ENCODE measurements at regions of chr3 and their contacts with region 1.

Region 1: GRCh38 chr3:63993653-63994079 is 29.6 kb downstream of the PSMD6 start:
- DNase-seq: peak; percentile 61
- H3K4me3 Mint-ChIP-seq: no peak overlapping the region
- H3K27ac Mint-ChIP-seq: peak overlapping the region; percentile 65
- H3K4me1 Mint-ChIP-seq: peaks cover 30% of the 10 kb centered on the region
- H3K27me3 Mint-ChIP-seq: no peaks in the 10 kb centered on the region

Region 2: GRCh38 chr3:63945558-63946096 is 48.0 kb before region 1 on chr3:
- CTCF ChIA-PET with region 1: interaction called, 10 read pairs
- POLR2A ChIA-PET with region 1: no interaction called
- intact Hi-C with region 1: no loop called
- DNase-seq: no peak
- H3K4me3 Mint-ChIP-seq: no peak overlapping the region
- H3K27ac Mint-ChIP-seq: no peak overlapping the region
- H3K4me1 Mint-ChIP-seq: peaks cover 56% of the 10 kb centered on the region
- H3K27me3 Mint-ChIP-seq: no peaks in the 10 kb centered on the region

Region 3: DNA sequence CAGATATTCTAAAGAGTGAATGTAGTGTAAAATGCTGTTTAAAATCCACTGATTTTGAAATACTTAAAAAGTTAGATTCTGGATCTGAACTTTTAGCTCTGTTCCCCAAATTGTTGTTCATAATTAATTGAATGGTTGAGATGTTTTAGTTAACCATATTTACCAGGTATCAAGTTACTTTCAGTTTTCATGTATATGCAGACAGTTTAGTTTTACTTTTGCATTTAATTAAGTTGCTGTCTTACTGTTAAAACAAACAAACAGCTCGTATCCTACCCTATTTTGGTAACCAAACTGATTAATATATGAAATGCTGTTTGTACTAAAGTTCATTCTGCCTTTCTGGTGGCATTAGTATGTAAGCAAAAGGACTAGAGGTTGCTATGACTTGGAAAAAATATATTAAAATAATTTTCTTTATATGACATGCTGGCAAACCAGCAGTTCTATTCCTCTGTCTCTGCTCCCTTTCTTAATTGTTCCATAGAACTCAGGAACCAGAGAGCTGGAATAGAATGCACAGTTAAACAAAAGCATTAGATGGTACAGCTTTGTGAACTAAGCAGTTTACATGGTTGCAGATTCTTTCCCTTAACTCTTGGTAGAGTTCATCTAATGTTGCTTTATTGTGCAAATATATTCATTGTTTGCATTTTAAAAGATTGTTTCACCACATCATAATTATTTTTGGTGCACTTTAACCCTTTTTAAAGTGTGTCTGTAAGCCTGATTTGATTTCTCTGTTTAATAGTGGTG is 42.0 kb before region 1 on chr3:
- CTCF ChIA-PET with region 1: interaction called, 360 read pairs
- POLR2A ChIA-PET with region 1: no interaction called
- intact Hi-C with region 1: no loop called
- DNase-seq: no peak
- H3K4me3 Mint-ChIP-seq: peak overlapping the region; percentile 11
- H3K27ac Mint-ChIP-seq: peak overlapping the region; percentile 26
- H3K4me1 Mint-ChIP-seq: peaks cover 51% of the 10 kb centered on the region
- H3K27me3 Mint-ChIP-seq: no peaks in the 10 kb centered on the region

Region 4: DNA sequence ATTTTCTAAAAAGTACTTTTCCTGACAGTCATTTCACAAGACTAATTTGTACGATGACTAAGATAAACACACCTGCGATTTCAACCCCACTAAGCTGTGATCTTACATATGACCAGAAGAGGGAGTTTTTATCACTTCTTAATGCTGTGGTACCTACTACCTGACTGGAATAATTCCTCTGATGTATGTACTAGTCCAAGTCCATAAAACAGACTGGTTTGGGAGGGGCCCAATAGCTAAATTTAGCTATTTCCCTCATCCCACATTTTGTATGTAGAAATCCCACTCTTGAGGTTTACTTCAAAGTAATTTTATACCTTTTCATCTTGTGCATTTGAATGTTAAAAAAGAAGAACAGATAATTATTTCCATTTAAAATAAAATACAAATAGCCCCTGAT is 31.8 kb before region 1 on chr3:
- CTCF ChIA-PET with region 1: interaction called, 360 read pairs
- POLR2A ChIA-PET with region 1: no interaction called
- intact Hi-C with region 1: loop called (anchors 1 kb)
- DNase-seq: no peak
- H3K4me3 Mint-ChIP-seq: no peak overlapping the region
- H3K27ac Mint-ChIP-seq: no peak overlapping the region
- H3K4me1 Mint-ChIP-seq: peaks cover 63% of the 10 kb centered on the region
- H3K27me3 Mint-ChIP-seq: no peaks in the 10 kb centered on the region

Region 5: DNA sequence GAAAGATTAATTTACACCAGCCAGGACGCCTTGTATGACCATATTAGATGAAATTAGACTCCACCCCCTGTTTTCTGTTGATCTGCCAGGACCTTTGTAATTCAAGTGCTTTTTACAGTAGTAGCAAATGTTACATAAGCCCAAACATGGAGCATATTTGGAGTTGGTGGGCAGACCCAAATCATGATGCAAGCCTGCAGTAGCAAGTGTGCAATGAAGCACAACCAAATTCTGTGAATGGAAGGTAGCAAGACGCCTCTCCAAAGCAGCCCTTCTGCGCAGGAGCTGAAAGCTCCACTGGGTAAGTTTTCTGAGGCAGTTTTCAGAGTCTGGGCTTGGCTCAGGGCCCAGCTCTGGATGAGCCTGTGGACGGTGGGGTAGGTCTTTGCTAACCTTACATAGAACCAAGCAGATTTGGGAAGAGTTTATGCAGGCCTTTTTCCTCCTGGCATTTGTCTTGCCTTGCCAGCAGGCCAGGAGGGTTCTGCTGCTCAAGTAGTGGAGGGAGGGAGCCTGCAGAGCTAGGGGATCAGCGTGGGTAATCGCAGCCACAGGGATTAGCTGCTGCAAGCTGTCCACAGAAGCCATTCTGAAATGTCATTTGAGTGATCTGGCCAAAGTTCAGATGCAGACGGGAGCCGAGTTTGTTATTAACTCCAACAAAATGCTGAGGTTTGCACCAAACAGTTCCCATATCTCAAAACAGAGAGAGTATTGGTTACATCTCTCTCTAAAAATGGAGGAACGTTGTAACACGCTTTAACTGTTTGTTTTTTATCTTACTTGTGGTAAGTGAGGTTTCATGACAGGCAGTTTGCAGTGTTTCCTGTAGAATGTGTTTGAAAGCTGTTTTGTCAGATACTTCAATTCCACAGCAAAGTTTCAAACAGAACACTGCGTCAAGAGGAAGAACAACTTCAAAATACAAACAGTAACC is 25.7 kb before region 1 on chr3:
- CTCF ChIA-PET with region 1: interaction called, 360 read pairs
- POLR2A ChIA-PET with region 1: no interaction called
- intact Hi-C with region 1: loop called (anchors 1 kb)
- DNase-seq: peak; percentile 45
- H3K4me3 Mint-ChIP-seq: peak overlapping the region; percentile 71
- H3K27ac Mint-ChIP-seq: peak overlapping the region; percentile 90
- H3K4me1 Mint-ChIP-seq: peaks cover 88% of the 10 kb centered on the region
- H3K27me3 Mint-ChIP-seq: no peaks in the 10 kb centered on the region

Region 6: GRCh38 chr3:64011685-64012084 is 18.0 kb after region 1 on chr3:
- CTCF ChIA-PET with region 1: interaction called, 18 read pairs
- POLR2A ChIA-PET with region 1: no interaction called
- intact Hi-C with region 1: no loop called
- DNase-seq: no peak
- H3K4me3 Mint-ChIP-seq: no peak overlapping the region
- H3K27ac Mint-ChIP-seq: peak overlapping the region; percentile 39
- H3K4me1 Mint-ChIP-seq: peaks cover 35% of the 10 kb centered on the region
- H3K27me3 Mint-ChIP-seq: no peaks in the 10 kb centered on the region

Region 7: DNA sequence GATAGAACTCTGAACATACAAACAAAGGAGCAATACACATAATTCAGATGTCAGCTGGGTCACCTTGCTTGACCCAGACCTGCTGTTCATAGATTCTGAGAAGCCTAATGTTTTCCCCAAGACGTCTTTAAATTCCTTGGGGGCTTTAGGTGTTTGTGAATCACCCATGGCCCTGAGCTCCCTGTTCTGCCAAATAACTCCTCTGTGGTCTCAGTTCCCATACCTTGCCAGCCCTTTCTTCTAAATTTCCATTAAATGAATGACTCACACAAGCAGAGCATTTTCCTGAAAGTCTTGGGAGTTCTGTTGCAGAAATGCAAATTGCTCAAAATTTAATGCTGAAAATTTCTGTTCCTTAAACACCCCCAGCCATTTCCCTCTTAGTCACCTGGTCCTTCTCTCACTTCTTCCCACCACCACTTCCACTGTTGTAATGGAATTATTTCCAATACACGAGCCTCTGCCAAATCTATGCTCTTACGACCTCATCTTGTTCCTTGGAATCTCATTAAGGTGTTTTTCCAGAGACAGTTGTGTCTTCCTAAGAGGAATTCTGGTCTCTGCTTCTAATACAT is 63.0 kb after region 1 on chr3:
- CTCF ChIA-PET with region 1: no interaction called
- POLR2A ChIA-PET with region 1: no interaction called
- intact Hi-C with region 1: no loop called
- DNase-seq: no peak
- H3K4me3 Mint-ChIP-seq: no peak overlapping the region
- H3K27ac Mint-ChIP-seq: no peak overlapping the region
- H3K4me1 Mint-ChIP-seq: no peaks in the 10 kb centered on the region
- H3K27me3 Mint-ChIP-seq: peaks cover 35% of the 10 kb centered on the region